T-cell (primary cell): ENCODE measurements at regions of chr21 and their contacts with region 1.

Region 1: GRCh38 chr21:24147674-24148073 is 1459.6 kb downstream of the MRPL39 start:
- DNase-seq: no peak
- ATAC-seq: no peak
- H3K4me3 ChIP-seq: no peak overlapping the region
- H3K4me3 Mint-ChIP-seq: no peak overlapping the region
- H3K27ac ChIP-seq: no peak overlapping the region
- H3K27ac Mint-ChIP-seq: no peak overlapping the region
- H3K4me1 ChIP-seq: no peaks in the 10 kb centered on the region
- H3K4me1 Mint-ChIP-seq: no peaks in the 10 kb centered on the region
- H3K27me3 ChIP-seq: no peaks in the 10 kb centered on the region
- H3K27me3 Mint-ChIP-seq: no peaks in the 10 kb centered on the region

Region 2: GRCh38 chr21:23939369-23940065 is 208.2 kb before region 1 on chr21:
- CTCF ChIA-PET with region 1: no interaction called
- POLR2A ChIA-PET with region 1: interaction called in 1 of 2 experiments, 10 read pairs
- DNase-seq: no peak
- ATAC-seq: no peak
- H3K4me3 ChIP-seq: no peak overlapping the region
- H3K4me3 Mint-ChIP-seq: no peak overlapping the region
- H3K27ac ChIP-seq: no peak overlapping the region
- H3K27ac Mint-ChIP-seq: no peak overlapping the region
- H3K4me1 ChIP-seq: no peaks in the 10 kb centered on the region
- H3K4me1 Mint-ChIP-seq: peaks cover 0 to 3% (median 0%) of the 10 kb centered on the region in 3 donors
- H3K27me3 ChIP-seq: no peaks in the 10 kb centered on the region
- H3K27me3 Mint-ChIP-seq: peaks cover 0 to 4% of the 10 kb centered on the region in 2 donors

Region 3: DNA sequence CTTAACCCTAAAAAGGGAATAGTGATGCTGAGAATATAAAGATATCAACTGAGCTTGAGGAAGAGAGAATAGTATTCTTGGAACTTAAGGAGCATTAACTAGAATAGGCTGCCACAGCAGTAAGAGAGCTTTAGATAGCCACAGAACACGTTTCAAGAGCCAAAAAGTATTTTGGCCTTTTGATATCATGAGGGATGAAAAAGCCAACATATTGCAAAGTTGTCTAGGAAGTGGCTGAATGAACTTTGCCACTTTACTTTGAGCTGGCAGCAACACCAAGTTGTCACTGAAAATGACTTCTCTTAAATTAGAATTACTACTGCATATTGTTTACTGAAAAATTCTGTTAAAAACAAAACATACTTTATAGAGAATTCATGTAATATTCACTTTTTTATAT is 16.6 kb before region 1 on chr21:
- CTCF ChIA-PET with region 1: no interaction called
- POLR2A ChIA-PET with region 1: no interaction called
- DNase-seq: no peak
- ATAC-seq: no peak
- H3K4me3 ChIP-seq: no peak overlapping the region
- H3K4me3 Mint-ChIP-seq: no peak overlapping the region
- H3K27ac ChIP-seq: no peak overlapping the region
- H3K27ac Mint-ChIP-seq: no peak overlapping the region
- H3K4me1 ChIP-seq: no peaks in the 10 kb centered on the region
- H3K4me1 Mint-ChIP-seq: no peaks in the 10 kb centered on the region
- H3K27me3 ChIP-seq: no peaks in the 10 kb centered on the region
- H3K27me3 Mint-ChIP-seq: no peaks in the 10 kb centered on the region